Activated T-helper 2 cell treated with anti-CD3 and anti-CD28 coated beads, Interferon-gamma antibody, Interleukin-2, Interleukin-4, amounts not matched to agents 10 μg/mL and 5 μg/mL and 100 μg/mL, durations not matched to agents 14 hours and 24 hours and 36 hours (primary cell): ENCODE measurements at regions of chr22 and their contacts with region 1.

Region 1: DNA sequence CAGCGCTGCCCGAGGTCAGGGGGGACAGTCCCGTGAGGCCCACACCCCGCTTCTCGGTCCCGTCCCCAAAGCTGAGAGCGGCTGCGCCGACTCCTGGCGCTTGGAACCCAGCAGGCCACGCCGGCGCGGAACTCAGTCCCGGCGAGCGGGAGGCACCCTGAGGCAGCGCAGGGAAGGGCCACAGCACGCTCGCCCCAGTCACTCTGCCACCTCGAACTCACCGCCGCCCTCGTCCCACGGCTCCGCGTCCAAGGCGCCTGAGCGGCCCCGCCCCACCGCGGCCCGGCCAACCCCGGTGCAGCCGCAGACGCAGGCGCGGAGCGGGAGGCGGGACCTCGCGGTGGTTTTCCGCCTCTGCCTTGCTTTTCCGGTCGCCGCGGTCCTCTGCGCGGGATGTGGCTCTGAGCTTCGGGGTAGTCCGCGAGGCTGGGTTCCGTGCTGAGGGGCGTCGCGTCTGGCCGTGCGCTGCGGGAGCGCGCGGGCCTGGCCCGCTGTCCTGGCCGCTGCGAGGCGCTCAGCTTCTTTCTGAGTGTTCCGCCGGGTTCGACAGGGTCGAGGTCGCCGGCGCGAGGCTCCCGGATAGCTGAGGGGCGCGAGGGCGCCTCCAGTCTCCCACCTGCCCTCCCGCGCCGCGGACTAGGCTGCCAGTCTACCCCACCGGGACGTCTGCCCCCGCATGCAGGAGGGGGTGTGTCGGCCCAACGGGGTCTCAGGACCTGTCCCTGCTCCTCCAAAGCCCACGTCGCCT is at the start of gene CDPF1:
- DNase-seq: peak; percentile 91
- H3K4me3 Mint-ChIP-seq: peak within 1 kb of the TSS; percentile 79
- H3K27ac Mint-ChIP-seq: peak within 1 kb of the TSS; percentile 84
- H3K4me1 Mint-ChIP-seq: peaks cover 30% of the 10 kb centered on the region
- H3K27me3 Mint-ChIP-seq: no peaks in the 10 kb centered on the region
- total RNA-seq, gene CDPF1: 7.7 and 10.7 TPM in 2 replicates

Region 2: GRCh38 chr22:46013460-46014416 is 236.5 kb before region 1 on chr22:
- intact Hi-C with region 1: loop called (anchors 1 kb)
- DNase-seq: peak; percentile 60
- H3K4me3 Mint-ChIP-seq: peak overlapping the region; percentile 83
- H3K27ac Mint-ChIP-seq: peak overlapping the region; percentile 77
- H3K4me1 Mint-ChIP-seq: peaks cover 5% of the 10 kb centered on the region
- H3K27me3 Mint-ChIP-seq: peaks cover 6% of the 10 kb centered on the region

Region 3: GRCh38 chr22:46150034-46150654 is 100.1 kb before region 1 on chr22 and contains the start of gene PPARA:
- intact Hi-C with region 1: loop called (anchors 5 kb)
- DNase-seq: peak; percentile 82
- H3K4me3 Mint-ChIP-seq: peak within 1 kb of the TSS; percentile 81
- H3K27ac Mint-ChIP-seq: no peak within 1 kb of the TSS
- H3K4me1 Mint-ChIP-seq: peaks cover 12% of the 10 kb centered on the region
- H3K27me3 Mint-ChIP-seq: peaks cover 34% of the 10 kb centered on the region
- total RNA-seq, gene PPARA: 14.0 and 14.5 TPM in 2 replicates